ENCODE measurements at regions of chr6 and their contacts with region 1.

Region 1: GRCh38 chr6:33248925-33249731 is 22.5 kb downstream of the VPS52 start:
- DNase-seq: peak; percentile 87 to 98 (median 95)
- ATAC-seq: peak; percentile 86 to 89
- H3K4me3 Mint-ChIP-seq: peak overlapping the region; percentile 83 to 94 (median 90)
- H3K27ac Mint-ChIP-seq: peak overlapping the region; percentile 91 to 99 (median 98)
- H3K4me1 Mint-ChIP-seq: peaks cover 22 to 41% (median 38%) of the 10 kb centered on the region in 4 donors
- H3K27me3 Mint-ChIP-seq: no peaks in the 10 kb centered on the region

Region 2: DNA sequence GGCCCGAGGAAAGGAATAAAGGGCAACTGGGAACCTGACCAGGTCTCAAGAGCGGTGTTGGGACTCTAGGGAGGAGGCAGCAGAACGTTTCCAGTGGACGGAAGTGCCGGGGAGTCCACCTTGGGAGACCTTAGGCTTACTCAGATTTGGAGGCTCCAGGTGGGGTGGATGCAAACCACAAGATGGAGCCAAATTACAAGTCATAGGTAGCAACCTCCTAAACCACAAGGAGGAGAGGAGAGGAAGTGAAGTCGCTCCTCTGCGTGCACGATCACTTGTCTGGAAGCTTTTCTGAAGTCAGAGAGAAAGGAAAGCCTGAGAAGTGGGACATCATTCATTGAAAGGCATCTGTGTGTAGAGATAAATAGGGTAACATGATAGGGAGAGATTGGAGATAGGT is 249.1 kb before region 1 on chr6:
- POLR2A ChIA-PET with region 1: no interaction called
- DNase-seq: peak in 6 of 10 donors; percentile 17 to 69 (median 36)
- ATAC-seq: peak; percentile 72 to 86
- H3K4me3 Mint-ChIP-seq: peak overlapping the region in 3 of 10 donors; percentile 3 to 9 (median 3)
- H3K27ac Mint-ChIP-seq: peak overlapping the region in 5 of 10 donors; percentile 15 to 66 (median 43)
- H3K4me1 Mint-ChIP-seq: peaks cover 4 to 9% (median 8%) of the 10 kb centered on the region in 4 donors
- H3K27me3 Mint-ChIP-seq: peaks cover 1 to 13% (median 4%) of the 10 kb centered on the region in 5 donors

Region 3: GRCh38 chr6:33147807-33148666 is 101.1 kb before region 1 on chr6:
- POLR2A ChIA-PET with region 1: no interaction called
- DNase-seq: peak in 2 of 10 donors; percentile 17 to 30
- ATAC-seq: no peak
- H3K4me3 Mint-ChIP-seq: no peak overlapping the region
- H3K27ac Mint-ChIP-seq: no peak overlapping the region
- H3K4me1 Mint-ChIP-seq: peaks cover 3 to 10% (median 3%) of the 10 kb centered on the region in 4 donors
- H3K27me3 Mint-ChIP-seq: peaks cover 3 to 21% (median 6%) of the 10 kb centered on the region in 5 donors

Region 4: DNA sequence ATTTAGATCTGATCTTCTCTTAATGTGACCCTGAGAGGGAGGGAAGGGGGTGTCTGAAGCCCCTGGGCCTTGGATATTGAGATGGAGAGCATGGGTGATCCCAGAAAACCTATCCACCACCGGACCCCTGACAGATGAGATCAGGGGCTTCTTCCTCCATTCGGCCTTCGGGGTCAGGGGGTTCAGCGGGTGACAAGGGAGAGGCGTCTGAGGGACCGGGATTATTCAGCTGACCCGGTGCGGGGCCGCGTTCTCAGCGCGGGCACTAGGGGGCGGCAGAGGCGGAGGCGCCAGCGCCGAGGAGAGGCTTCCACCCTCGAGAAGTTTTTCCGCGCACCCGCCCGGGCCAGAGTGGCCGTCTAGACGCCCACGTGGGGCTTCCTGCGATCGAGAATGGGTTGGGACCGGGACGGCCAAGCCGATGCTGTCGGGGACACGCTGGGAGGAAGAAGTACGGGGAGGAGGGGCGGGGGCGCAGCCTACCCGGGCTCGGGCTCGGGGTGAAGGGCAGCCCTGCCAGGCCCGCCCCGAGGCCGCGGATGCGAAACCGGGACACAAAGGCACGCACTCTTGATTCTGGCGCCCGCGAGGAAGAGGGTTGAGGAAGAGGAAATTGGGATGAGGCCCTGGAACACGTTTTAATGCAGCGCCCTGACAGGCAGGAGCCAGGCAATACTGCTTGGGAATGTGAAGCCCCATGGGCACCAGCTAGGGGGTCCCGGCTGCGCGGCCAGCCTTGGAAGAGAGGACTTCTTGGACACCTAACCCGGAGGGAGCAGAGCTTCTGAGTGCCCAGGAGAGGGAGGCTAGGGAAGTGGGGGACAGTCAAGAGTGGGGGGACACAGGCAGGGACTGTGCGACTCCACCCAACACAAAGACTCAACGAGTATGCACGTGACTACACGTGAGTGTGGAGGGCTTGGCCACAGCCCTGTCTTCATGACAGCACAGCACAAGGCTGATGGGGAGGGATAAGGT is 87.5 kb before region 1 on chr6:
- POLR2A ChIA-PET with region 1: interaction called, 52 read pairs
- DNase-seq: peak; percentile 62 to 88 (median 81)
- ATAC-seq: peak; percentile 96 to 98
- H3K4me3 Mint-ChIP-seq: peak overlapping the region; percentile 84 to 96 (median 88)
- H3K27ac Mint-ChIP-seq: peak overlapping the region; percentile 34 to 92 (median 71)
- H3K4me1 Mint-ChIP-seq: peaks cover 5 to 14% (median 12%) of the 10 kb centered on the region in 4 donors
- H3K27me3 Mint-ChIP-seq: peaks cover 0 to 3% (median 0%) of the 10 kb centered on the region in 5 donors

Region 5: DNA sequence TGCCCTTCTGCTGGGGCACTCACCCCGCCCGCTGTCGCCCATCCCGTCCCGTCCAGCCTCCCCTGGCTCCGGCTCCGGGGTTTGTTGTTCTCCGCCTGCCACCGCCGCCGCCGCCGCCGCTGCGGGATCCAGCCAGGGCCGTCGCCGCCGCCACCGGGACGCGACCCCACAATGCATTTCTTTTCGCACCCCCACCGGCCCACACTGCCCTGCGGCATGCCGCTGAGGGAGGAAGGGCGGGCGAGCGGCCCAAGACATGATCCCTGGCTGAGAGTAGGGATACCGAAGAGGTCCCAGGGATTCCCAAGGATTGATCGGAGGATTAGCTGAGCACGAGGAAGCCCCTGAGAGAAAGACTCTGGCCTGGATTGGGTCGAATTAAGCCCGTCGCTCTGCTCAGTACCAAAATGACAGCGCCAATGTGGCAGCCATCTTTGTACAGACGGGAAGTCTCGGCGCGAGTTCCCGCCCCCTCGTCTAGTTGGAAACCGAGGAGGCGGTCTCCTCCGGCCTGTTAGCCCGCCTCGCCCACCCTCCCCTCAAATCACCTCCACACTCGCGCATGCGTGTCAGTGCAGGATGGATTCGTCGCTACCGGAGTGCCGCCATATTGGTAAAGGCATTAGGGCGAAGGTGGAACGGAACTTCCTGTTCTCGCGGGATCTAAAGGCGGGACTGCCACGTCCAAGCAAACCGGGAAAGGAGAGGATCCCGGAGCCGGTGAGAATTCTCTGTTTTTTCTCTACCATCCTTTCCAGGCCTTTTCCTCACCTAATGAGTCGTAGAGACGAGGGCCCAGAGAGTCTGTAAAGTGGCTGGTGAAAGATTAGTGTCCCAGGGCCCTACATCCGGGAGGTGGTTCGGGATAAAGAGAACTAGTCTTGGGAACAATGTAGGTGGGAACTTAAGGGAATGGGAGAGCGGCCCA is 48.6 kb before region 1 on chr6 and contains the starts of genes RXRB and SLC39A7:
- POLR2A ChIA-PET with region 1: interaction called, 23 read pairs
- DNase-seq: peak; percentile 95 to 100 (median 99)
- ATAC-seq: peak; percentile 76 to 80
- H3K4me3 Mint-ChIP-seq: peak within 1 kb of the TSS; percentile 98 to 100 (median 99)
- H3K27ac Mint-ChIP-seq: peak within 1 kb of the TSS; percentile 95 to 100 (median 99)
- H3K4me1 Mint-ChIP-seq: peaks cover 48 to 85% (median 77%) of the 10 kb centered on the region in 4 donors
- H3K27me3 Mint-ChIP-seq: no peaks in the 10 kb centered on the region
- polyA plus RNA-seq, gene RXRB: 6.6 to 10.9 (median 7.3) TPM
- polyA plus RNA-seq, gene SLC39A7: 18.8 to 23.8 (median 21.8) TPM

Region 6: GRCh38 chr6:33271458-33272274 is 22.5 kb after region 1 on chr6 and contains the starts of genes RPS18 and VPS52:
- POLR2A ChIA-PET with region 1: interaction called, 84 read pairs
- DNase-seq: peak; percentile 78 to 100 (median 94)
- ATAC-seq: peak; percentile 86 to 88
- H3K4me3 Mint-ChIP-seq: peak within 1 kb of the TSS; percentile 92 to 99 (median 96)
- H3K27ac Mint-ChIP-seq: peak within 1 kb of the TSS; percentile 99 to 100 (median 99)
- H3K4me1 Mint-ChIP-seq: peaks cover 34 to 71% (median 70%) of the 10 kb centered on the region in 4 donors
- H3K27me3 Mint-ChIP-seq: no peaks in the 10 kb centered on the region
- polyA plus RNA-seq, gene RPS18: 9,896 to 11,320 (median 11,293) TPM
- polyA plus RNA-seq, gene VPS52: 9.3 to 19.3 (median 15.2) TPM

Region 7: DNA sequence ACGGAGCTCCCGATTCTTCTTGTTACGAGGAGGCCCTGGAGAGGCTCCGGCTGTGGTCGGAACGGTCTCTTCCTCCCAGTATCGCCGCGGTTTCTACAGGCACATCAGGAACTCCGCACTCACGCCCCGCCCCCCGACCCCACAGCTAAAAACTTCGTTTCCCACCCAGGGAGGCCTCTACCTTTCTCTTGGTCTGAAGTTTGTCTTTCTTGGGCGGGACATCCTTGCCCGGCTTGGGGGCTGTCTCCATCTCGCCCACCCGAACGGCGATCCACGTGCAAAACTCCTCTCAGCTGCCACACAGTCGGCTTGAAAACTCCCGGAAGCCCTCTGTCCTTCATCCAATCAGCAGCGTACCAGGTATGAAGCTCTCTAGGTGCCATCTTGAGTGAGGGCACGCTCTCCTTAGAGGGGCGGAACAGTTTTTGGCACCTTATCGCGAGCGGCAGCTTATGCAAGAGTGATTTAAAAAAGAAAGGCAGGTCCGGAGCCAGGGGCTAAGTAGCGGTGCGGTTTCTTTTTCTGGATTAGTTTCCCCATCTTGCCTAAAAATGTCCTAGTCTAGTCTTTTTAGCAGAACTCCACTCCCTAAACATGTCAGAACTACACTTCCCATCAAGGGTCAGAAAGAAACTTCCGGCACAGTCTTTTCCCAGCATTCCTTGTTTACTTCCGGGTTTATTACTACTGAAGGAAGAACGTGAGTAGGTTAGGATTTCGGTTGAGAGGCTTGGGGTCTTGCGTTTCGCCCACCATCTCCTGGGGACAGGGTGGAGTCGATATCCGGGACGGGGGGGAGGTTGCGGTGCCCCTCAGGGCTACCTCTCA is 40.0 kb after region 1 on chr6 and contains the starts of genes PFDN6 and WDR46:
- POLR2A ChIA-PET with region 1: interaction called, 11 read pairs
- DNase-seq: peak; percentile 53 to 91 (median 81)
- ATAC-seq: peak; percentile 96 to 97
- H3K4me3 Mint-ChIP-seq: peak within 1 kb of the TSS; percentile 87 to 100 (median 99)
- H3K27ac Mint-ChIP-seq: peak within 1 kb of the TSS; percentile 84 to 97 (median 94)
- H3K4me1 Mint-ChIP-seq: peaks cover 22 to 51% (median 48%) of the 10 kb centered on the region in 4 donors
- H3K27me3 Mint-ChIP-seq: no peaks in the 10 kb centered on the region
- polyA plus RNA-seq, gene PFDN6: 33.4 to 38.2 (median 35.5) TPM
- polyA plus RNA-seq, gene WDR46: 71.3 to 83.7 (median 74.1) TPM

Region 8: DNA sequence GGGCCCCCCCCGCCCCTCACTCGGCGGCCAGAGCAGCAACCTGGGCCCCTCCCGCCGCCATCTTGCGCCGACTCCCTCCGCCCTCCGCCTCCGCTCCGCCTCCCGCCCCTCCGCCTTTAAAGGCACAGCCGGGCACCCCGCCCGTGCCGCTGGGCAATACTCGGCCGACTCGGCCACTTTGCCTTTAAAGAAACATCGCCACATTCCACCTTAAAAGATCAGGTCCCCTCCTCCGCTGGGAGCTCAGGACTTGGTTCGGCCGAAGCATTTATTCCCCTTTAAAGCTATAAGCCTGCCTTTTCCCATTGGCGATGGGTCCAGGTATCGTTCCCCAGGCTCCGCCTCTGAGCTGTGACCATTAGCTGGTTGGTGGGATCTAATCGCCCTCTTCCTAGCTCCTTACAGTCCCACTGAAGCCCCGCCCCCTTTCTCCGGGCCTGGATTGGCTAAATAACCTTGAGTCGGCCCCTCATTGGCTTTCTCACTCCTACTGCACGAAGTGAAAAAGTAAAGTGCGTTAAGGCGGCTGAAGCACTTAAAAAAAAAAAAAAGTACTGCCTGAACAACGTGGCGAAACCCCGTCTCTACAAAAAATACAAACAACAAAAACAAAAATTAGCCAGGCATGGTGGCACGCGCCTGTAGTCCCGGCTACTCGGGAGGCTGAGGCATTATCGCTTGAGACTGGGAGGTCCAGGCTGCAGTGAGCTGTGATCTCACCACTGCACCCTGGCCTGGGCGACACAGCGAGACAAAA is 68.7 kb after region 1 on chr6 and contains the start of gene ZBTB22:
- POLR2A ChIA-PET with region 1: interaction called, 12 read pairs
- DNase-seq: peak; percentile 89 to 98 (median 94)
- ATAC-seq: peak; percentile 59 to 62
- H3K4me3 Mint-ChIP-seq: peak within 1 kb of the TSS in 9 of 10 donors; percentile 96 to 100 (median 99)
- H3K27ac Mint-ChIP-seq: peak within 1 kb of the TSS; percentile 95 to 100 (median 98)
- H3K4me1 Mint-ChIP-seq: peaks cover 36 to 87% (median 79%) of the 10 kb centered on the region in 4 donors
- H3K27me3 Mint-ChIP-seq: no peaks in the 10 kb centered on the region
- polyA plus RNA-seq, gene ZBTB22: 10.4 to 13.4 (median 10.7) TPM

Region 9: DNA sequence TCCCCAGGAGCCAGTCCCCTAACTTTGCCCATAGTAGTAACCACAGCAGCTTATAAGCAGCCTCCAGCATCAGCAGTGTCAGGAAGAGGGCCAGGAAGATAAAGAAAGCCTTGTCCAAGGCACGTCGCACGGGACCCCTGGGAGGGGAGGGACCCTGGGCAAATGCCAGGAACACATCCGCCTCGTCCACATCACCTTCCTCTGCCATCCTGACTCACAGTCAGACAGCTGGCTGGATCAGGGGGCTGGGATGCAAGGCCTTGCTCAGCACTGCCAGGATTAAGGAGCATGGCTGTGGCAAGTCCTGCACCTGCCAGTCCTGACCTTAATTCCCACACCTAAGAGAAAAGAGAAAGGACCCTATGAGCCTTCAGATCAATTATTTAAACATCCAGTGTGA is 79.9 kb after region 1 on chr6:
- POLR2A ChIA-PET with region 1: no interaction called
- DNase-seq: no peak
- ATAC-seq: no peak
- H3K4me3 Mint-ChIP-seq: no peak overlapping the region
- H3K27ac Mint-ChIP-seq: peak overlapping the region in 1 of 10 donors; percentile 16
- H3K4me1 Mint-ChIP-seq: peaks cover 0 to 41% (median 9%) of the 10 kb centered on the region in 4 donors
- H3K27me3 Mint-ChIP-seq: no peaks in the 10 kb centered on the region

Measured in naive thymus-derived CD8-positive, alpha-beta T cell (primary cell).